Colonic mucosa (tissue), 4 donors: ENCODE measurements at regions of chr3 and their contacts with region 1.

Region 1: DNA sequence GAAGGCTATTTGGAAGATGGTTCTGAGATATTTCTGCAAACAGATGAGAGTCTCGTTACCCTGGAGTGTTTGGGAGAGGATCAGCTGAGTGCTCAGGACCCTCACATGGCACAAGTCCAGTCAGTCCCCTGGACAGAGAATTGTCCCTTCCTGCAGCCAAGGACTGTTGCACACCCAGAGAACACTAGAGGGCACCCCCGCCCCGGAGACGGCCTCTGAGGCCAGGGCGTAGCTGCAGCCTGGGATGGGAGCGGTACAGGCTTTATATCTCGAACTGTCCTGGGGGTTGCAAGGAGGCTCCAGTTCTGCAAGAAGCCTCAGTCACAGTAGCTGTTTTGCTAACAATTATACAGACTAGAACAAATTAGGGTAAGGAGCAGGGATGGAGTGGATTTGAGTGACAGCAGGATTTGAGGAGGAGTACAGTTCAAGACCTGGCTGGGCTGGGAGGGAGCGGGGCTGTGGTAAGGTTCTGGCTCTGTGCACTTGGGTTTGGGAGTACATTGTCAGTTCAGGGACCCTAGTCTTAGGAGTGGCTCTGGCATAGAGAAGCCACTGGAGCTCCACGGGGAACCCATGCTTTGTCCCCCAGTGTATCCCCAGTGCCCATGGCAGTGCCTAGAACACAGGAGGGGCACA is 67.6 kb upstream of the HACD2 start:
- DNase-seq: peak; percentile 88
- H3K4me3 ChIP-seq: no peak overlapping the region
- H3K27ac ChIP-seq: peak overlapping the region; percentile 61
- H3K4me1 ChIP-seq: no peaks in the 10 kb centered on the region
- H3K27me3 ChIP-seq: no peaks in the 10 kb centered on the region
- CTCF ChIP-seq: peak; percentile 90

Region 2: DNA sequence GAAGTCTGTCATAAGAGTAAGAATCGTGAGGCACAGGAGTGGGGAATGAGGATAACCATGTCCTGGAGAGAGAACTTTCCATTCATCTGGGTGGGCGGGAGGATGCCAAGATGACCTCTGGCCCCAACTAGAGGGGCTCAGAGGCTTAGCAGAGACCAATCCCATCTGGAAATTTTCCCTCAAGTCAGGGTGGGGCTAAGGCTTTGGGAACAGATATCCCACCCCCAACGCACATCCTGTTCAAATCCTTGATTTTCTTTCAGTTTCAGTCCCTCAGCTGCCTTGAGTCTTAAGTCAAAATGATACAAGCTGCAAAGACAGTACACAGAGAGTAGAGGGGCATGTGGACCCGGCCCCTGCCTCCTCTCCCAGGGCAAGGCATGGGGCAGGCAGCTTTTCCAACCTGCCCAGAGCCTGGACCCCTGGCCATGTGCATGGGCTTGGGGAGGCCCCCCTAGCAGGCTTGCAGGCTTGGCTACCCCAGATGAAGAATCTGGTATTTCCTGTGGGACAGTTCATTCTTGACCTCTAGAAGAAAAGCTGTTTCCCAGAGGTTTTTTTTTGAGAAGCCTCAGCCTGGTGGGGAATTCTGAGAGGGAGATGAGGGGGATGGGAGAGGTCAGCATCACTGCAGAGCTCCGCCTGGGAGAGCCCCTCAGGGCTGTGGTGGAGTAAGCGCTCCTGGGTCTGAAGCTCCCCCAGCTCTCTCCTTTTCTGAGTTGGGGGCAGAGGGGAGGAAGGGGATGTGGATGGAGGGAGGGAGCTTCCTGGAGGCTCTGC is 42.1 kb after region 1 on chr3:
- intact Hi-C with region 1: loop called (anchors 5 kb)
- DNase-seq: no peak
- H3K4me3 ChIP-seq: no peak overlapping the region
- H3K27ac ChIP-seq: peak overlapping the region; percentile 2
- H3K4me1 ChIP-seq: no peaks in the 10 kb centered on the region
- H3K27me3 ChIP-seq: no peaks in the 10 kb centered on the region
- CTCF ChIP-seq: no peak

Region 3: DNA sequence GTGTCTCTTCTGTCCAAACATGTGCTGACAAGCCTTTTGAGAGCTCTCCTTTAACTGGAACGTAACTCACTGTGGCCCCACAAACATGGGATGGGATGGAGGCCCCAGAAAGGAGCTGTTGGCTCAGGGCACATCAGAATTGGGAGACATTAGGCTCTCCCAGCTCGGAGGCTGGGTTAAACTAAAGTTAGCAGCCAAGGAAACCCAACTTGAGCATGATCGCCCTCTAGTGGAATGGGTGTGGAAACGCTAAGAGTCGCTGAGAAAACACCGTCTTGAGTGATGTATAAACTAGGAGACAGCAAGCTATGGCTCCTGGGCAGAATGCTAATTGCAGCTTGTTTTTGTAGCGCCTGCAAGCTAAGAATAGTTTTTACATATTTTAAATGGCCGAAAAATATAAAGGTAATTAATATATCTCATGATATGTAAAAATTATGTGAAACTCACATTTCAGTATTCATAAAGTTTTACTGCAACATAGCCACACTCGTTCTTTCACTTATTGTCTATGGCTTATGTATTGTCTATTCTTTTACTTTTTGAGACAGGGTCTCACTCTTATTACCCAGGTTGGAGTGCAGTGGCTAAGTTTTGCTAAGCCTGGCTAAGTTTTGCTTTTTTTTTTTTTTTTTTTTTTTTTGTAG is 71.2 kb after region 1 on chr3:
- intact Hi-C with region 1: loop called (anchors 5 kb)
- DNase-seq: peak; percentile 70
- H3K4me3 ChIP-seq: no peak overlapping the region
- H3K27ac ChIP-seq: no peak overlapping the region
- H3K4me1 ChIP-seq: no peaks in the 10 kb centered on the region
- H3K27me3 ChIP-seq: no peaks in the 10 kb centered on the region
- CTCF ChIP-seq: peak; percentile 74